Heart right ventricle (tissue), 16 donors: ENCODE measurements at regions of chr21 and their contacts with region 1.

Region 1: GRCh38 chr21:28745131-28746016 is 247.3 kb downstream of the LTN1 start:
- DNase-seq: peak; percentile 47 to 81
- ATAC-seq: peak; percentile 83 to 96 (median 91)
- H3K4me3 ChIP-seq: peak overlapping the region in 9 of 10 donors; percentile 18 to 59 (median 54)
- H3K27ac ChIP-seq: peak overlapping the region; percentile 18 to 93 (median 84)
- H3K4me1 ChIP-seq: peaks cover 0 to 32% (median 13%) of the 10 kb centered on the region in 9 donors
- H3K27me3 ChIP-seq: no peaks in the 10 kb centered on the region
- CTCF ChIP-seq: peak; percentile 89 to 96 (median 94)

Region 2: GRCh38 chr21:26842976-26843932 is 1902.1 kb before region 1 on chr21:
- intact Hi-C with region 1: loop called in 7 of 10 experiments (anchors 2 to 5 kb)
- DNase-seq: peak; percentile 90 to 95
- ATAC-seq: peak; percentile 45 to 69 (median 65)
- H3K4me3 ChIP-seq: peak overlapping the region; percentile 60 to 95 (median 80)
- H3K27ac ChIP-seq: peak overlapping the region; percentile 93 to 99 (median 96)
- H3K4me1 ChIP-seq: peaks cover 3 to 67% (median 57%) of the 10 kb centered on the region in 9 donors
- H3K27me3 ChIP-seq: peaks cover 0 to 56% (median 0%) of the 10 kb centered on the region in 7 donors
- CTCF ChIP-seq: peak in 8 of 9 donors; percentile 26 to 62 (median 41)

Region 3: GRCh38 chr21:27570306-27570868 is 1175.0 kb before region 1 on chr21:
- intact Hi-C with region 1: loop called in 2 of 10 experiments (anchors 10 kb)
- DNase-seq: peak; percentile 31 to 69
- ATAC-seq: peak; percentile 44 to 93 (median 90)
- H3K4me3 ChIP-seq: no peak overlapping the region
- H3K27ac ChIP-seq: peak overlapping the region in 6 of 10 donors; percentile 20 to 55 (median 42)
- H3K4me1 ChIP-seq: peaks cover 0 to 20% (median 7%) of the 10 kb centered on the region in 9 donors
- H3K27me3 ChIP-seq: no peaks in the 10 kb centered on the region
- CTCF ChIP-seq: no peak

Region 4: GRCh38 chr21:27802816-27803475 is 942.4 kb before region 1 on chr21:
- intact Hi-C with region 1: loop called in 1 of 10 experiments (anchors 10 kb)
- DNase-seq: peak in 1 of 2 donors; percentile 36
- ATAC-seq: peak in 2 of 8 donors; percentile 37 to 38
- H3K4me3 ChIP-seq: no peak overlapping the region
- H3K27ac ChIP-seq: no peak overlapping the region
- H3K4me1 ChIP-seq: peaks cover 0 to 15% (median 0%) of the 10 kb centered on the region in 9 donors
- H3K27me3 ChIP-seq: no peaks in the 10 kb centered on the region
- CTCF ChIP-seq: peak; percentile 19 to 75 (median 60)

Region 5: GRCh38 chr21:28099001-28099705 is 646.2 kb before region 1 on chr21:
- intact Hi-C with region 1: loop called in 1 of 10 experiments (anchors 5 kb)
- DNase-seq: peak; percentile 29 to 69
- ATAC-seq: peak; percentile 92 to 99 (median 95)
- H3K4me3 ChIP-seq: no peak overlapping the region
- H3K27ac ChIP-seq: peak overlapping the region in 5 of 10 donors; percentile 11 to 71 (median 53)
- H3K4me1 ChIP-seq: peaks cover 0 to 28% (median 7%) of the 10 kb centered on the region in 9 donors
- H3K27me3 ChIP-seq: no peaks in the 10 kb centered on the region
- CTCF ChIP-seq: no peak

Region 6: DNA sequence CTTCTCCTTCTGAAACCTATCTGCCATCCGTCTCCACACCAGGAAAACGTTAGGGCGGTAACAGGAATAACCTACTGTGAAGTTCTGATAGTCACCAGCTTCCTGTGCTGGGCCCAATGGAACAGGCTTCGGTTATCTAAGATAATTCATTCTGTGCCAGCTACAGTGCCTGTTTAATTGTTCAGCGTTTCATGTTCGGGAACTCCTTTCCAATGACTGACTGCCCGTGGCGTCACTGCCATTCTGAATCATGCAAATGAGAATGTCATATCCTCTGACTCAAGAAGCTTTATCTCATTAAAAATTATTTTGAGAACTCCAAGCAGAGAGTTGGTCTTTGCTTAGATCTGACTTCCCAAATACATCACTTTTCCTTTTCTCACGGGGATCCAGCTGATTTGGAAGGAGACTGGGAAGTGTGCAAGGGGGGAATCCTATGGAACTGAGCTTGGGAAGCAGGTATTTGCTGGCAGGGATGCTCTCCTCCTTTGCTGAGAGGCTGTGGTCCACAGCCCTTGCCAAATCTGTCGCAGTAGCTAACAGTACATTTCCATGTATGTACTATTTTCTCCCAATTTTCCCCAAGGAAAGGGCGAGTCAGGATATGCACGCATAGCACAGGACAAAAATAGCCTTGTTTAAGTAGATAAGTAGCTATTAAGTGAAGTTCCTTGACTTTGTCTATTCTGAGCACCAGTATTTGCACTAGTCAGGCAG is 111.4 kb before region 1 on chr21:
- intact Hi-C with region 1: loop called in 2 of 10 experiments (anchors 5 kb)
- DNase-seq: peak; percentile 32 to 68
- ATAC-seq: peak; percentile 73 to 95 (median 88)
- H3K4me3 ChIP-seq: peak overlapping the region in 1 of 10 donors; percentile 3
- H3K27ac ChIP-seq: peak overlapping the region; percentile 47 to 89 (median 80)
- H3K4me1 ChIP-seq: peaks cover 4 to 56% (median 30%) of the 10 kb centered on the region in 9 donors
- H3K27me3 ChIP-seq: no peaks in the 10 kb centered on the region
- CTCF ChIP-seq: no peak

Region 7: GRCh38 chr21:28699596-28700259 is 45.6 kb before region 1 on chr21:
- intact Hi-C with region 1: no loop called
- DNase-seq: no peak
- ATAC-seq: no peak
- H3K4me3 ChIP-seq: no peak overlapping the region
- H3K27ac ChIP-seq: no peak overlapping the region
- H3K4me1 ChIP-seq: peaks cover 0 to 11% (median 3%) of the 10 kb centered on the region in 9 donors
- H3K27me3 ChIP-seq: no peaks in the 10 kb centered on the region
- CTCF ChIP-seq: no peak

Region 8: DNA sequence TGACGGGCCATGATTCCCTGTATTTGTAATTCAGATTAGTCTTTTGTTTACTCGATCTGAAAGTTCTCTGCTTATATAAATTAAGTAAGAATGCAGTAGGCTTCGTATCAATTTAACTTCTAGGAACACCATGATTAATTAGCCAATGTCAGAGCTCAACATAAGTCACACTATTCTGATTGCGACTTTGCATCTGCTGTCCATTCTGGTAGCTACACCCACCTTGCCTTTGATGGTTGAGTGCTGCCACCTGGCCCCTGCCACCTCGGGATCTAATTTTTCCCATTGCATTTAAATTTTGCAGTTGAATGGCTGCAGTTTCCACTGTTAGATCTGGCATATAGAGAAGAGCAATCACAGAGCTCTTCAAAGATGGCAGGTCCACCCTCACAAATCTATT is 107.3 kb after region 1 on chr21:
- intact Hi-C with region 1: no loop called
- DNase-seq: no peak
- ATAC-seq: no peak
- H3K4me3 ChIP-seq: no peak overlapping the region
- H3K27ac ChIP-seq: no peak overlapping the region
- H3K4me1 ChIP-seq: peaks cover 0 to 12% (median 0%) of the 10 kb centered on the region in 9 donors
- H3K27me3 ChIP-seq: no peaks in the 10 kb centered on the region
- CTCF ChIP-seq: no peak